Heart right ventricle (tissue), 16 donors: ENCODE measurements at regions of chr5 and their contacts with region 1.

Region 1: GRCh38 chr5:175534070-175534932 is 55.9 kb downstream of the SFXN1 start:
- DNase-seq: peak; percentile 70 to 81
- ATAC-seq: peak; percentile 91 to 97 (median 96)
- H3K4me3 ChIP-seq: peak overlapping the region in 2 of 10 donors; percentile 9 to 32
- H3K27ac ChIP-seq: no peak overlapping the region
- H3K4me1 ChIP-seq: peaks cover 0 to 17% (median 0%) of the 10 kb centered on the region in 9 donors
- H3K27me3 ChIP-seq: peaks cover 0 to 4% (median 0%) of the 10 kb centered on the region in 7 donors
- CTCF ChIP-seq: peak; percentile 83 to 100 (median 98)

Region 2: GRCh38 chr5:175696139-175696854 is 162.0 kb after region 1 on chr5:
- intact Hi-C with region 1: loop called in 1 of 10 experiments (anchors 5 kb)
- DNase-seq: peak; percentile 62 to 80
- ATAC-seq: peak; percentile 22 to 71 (median 58)
- H3K4me3 ChIP-seq: peak overlapping the region in 1 of 10 donors; percentile 7
- H3K27ac ChIP-seq: peak overlapping the region in 7 of 10 donors; percentile 3 to 88 (median 45)
- H3K4me1 ChIP-seq: peaks cover 10 to 57% (median 27%) of the 10 kb centered on the region in 9 donors
- H3K27me3 ChIP-seq: no peaks in the 10 kb centered on the region
- CTCF ChIP-seq: peak in 8 of 9 donors; percentile 20 to 78 (median 50)